Activated naive CD4-positive, alpha-beta T cell treated with anti-CD3 and anti-CD28 coated beads, Interleukin-2, amount 10 ng/mL, durations not matched to agents 7 days and 5 days (primary cell): ENCODE measurements at regions of chr9 and their contacts with region 1.

Region 1: DNA sequence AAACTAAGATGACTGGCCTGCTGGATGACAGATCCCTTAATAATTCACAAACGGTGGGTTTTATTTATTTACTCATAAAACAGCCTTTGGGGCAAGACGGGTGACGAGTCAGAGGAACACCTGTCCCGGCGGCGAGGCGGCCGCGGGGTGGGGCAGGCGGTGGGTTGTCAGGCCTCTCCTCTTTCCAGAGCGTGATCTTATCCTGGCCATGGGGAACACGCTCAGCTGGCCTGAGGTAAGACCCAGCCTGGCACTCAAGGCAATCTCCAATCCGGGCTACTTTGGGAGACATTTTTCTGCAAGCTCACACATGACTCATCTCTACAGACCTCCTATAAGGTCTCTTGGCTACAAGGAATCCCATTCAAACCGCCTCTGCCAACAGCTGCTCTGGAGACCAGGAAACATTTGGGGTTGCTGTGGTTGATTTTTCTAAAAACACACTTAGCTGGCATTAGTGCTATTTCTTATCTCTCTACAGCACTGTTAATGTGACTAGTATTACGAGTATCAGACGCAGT is 6.3 kb downstream of the RAPGEF1 start:
- DNase-seq: peak; percentile 53
- H3K4me3 Mint-ChIP-seq: peak overlapping the region; percentile 59
- H3K27ac Mint-ChIP-seq: peak overlapping the region; percentile 97
- H3K4me1 Mint-ChIP-seq: peaks cover 93% of the 10 kb centered on the region
- H3K27me3 Mint-ChIP-seq: no peaks in the 10 kb centered on the region

Region 2: DNA sequence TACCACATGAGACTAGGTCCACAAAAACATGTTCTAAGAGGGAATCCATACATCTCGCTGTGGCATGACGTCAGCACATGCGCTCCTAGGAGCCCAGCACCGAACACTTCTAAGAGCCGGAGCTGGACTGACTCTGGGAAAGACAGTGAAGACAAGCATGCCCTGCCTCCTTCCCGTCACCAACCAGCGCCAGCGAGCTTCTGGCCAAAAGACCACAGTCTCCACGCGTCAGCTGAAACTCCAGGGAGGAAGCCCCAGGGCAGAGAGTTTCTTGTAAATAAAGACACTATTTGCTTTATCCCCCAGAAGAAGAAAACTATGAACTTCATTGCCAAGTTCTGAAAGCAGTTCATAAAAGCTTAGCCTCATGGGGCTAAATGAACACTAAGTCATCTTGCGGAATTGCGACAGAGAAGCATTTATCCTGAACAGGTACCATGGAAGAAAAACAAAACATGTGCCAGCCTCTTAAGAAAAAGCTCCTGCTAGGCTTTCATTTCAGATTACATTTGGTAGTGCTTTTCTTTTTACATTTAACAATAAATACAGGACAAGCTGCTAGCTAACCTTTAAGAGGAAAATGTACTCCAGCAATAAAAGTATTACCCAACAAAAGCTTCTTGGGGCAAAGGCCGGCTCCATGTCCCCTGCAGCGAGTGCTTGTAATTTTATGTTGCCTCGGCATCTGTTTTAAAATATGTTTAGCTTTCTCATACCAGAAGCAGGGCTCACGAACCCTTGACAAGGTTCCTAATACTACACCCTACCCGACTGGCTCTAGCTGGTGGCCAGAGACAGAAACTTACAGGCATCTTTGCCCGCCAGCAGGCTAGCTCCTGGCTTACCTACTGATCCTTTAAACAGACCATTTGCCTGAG is 91.7 kb before region 1 on chr9:
- CTCF ChIA-PET with region 1: interaction called, 11 read pairs
- DNase-seq: no peak
- H3K4me3 Mint-ChIP-seq: no peak overlapping the region
- H3K27ac Mint-ChIP-seq: no peak overlapping the region
- H3K4me1 Mint-ChIP-seq: peaks cover 22% of the 10 kb centered on the region
- H3K27me3 Mint-ChIP-seq: no peaks in the 10 kb centered on the region

Region 3: GRCh38 chr9:131656356-131657036 is 77.1 kb before region 1 on chr9:
- CTCF ChIA-PET with region 1: no interaction called
- DNase-seq: peak; percentile 75
- H3K4me3 Mint-ChIP-seq: peak overlapping the region; percentile 18
- H3K27ac Mint-ChIP-seq: peak overlapping the region; percentile 88
- H3K4me1 Mint-ChIP-seq: peaks cover 63% of the 10 kb centered on the region
- H3K27me3 Mint-ChIP-seq: no peaks in the 10 kb centered on the region